Heart left ventricle (tissue), 16 donors: ENCODE measurements at regions of chr1 and their contacts with region 1.

Region 1: DNA sequence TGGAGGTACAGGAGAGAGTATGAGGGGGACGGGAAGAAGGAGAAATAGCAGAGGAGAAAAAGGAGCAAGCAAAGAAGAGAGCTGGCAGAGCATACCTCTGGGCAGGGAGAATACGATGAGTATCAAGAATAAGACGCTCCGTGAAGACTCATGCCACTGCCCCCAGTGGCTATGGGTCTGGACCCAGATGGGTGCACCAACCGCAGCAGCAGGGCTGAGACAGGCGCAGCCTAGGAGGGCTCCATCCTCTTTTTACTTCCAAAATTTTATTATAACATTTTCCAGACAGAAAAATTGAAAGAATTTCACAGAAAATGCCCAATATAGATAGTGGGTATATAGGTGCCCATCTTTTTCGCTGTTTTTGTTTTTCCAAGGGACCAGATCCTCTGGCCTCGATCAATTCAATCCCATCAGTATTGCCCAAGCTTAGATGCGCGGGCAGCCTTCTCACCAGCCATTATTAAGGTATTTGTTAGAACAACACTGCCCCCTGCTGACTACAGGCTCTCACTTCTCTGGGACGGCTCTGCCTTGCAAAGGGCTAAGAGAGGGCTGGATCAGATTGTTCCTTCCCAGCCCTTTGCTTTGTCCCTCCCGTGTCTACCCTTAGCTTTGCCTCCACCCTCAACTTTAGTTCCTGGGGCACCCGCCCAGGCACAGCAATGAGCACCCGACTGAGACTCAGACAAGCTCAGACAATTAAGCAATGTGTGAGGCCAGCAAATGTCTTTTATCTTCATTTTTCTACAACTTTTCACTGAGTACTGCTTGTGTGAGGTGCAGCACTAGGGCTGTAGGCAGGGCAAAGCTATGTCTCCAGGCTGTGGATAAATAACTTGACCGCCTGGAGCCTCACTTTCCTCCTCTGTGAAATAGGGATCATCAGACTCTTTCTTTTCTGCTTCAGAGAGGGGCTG is 17.5 kb upstream of the CAMK1G start:
- DNase-seq: peak; percentile 65 to 78 (median 68)
- ATAC-seq: peak; percentile 59 to 90 (median 81)
- H3K4me3 ChIP-seq: no peak overlapping the region
- H3K27ac ChIP-seq: no peak overlapping the region
- H3K4me1 ChIP-seq: peaks cover 0 to 5% (median 0%) of the 10 kb centered on the region in 12 donors
- H3K27me3 ChIP-seq: peaks cover 0 to 9% (median 0%) of the 10 kb centered on the region in 9 donors
- CTCF ChIP-seq: peak; percentile 59 to 84 (median 71)
- POLR2A ChIP-seq: no peak

Region 2: GRCh38 chr1:209207701-209208286 is 358.2 kb before region 1 on chr1:
- intact Hi-C with region 1: loop called in 6 of 10 experiments (anchors 5 to 10 kb)
- DNase-seq: peak; percentile 59 to 79 (median 63)
- ATAC-seq: peak; percentile 74 to 99 (median 92)
- H3K4me3 ChIP-seq: peak overlapping the region in 10 of 12 donors; percentile 4 to 53 (median 38)
- H3K27ac ChIP-seq: peak overlapping the region in 4 of 12 donors; percentile 6 to 22 (median 19)
- H3K4me1 ChIP-seq: peaks cover 0 to 16% (median 11%) of the 10 kb centered on the region in 12 donors
- H3K27me3 ChIP-seq: peaks cover 0 to 47% (median 25%) of the 10 kb centered on the region in 9 donors
- CTCF ChIP-seq: peak; percentile 39 to 90 (median 71)
- POLR2A ChIP-seq: no peak

Region 3: DNA sequence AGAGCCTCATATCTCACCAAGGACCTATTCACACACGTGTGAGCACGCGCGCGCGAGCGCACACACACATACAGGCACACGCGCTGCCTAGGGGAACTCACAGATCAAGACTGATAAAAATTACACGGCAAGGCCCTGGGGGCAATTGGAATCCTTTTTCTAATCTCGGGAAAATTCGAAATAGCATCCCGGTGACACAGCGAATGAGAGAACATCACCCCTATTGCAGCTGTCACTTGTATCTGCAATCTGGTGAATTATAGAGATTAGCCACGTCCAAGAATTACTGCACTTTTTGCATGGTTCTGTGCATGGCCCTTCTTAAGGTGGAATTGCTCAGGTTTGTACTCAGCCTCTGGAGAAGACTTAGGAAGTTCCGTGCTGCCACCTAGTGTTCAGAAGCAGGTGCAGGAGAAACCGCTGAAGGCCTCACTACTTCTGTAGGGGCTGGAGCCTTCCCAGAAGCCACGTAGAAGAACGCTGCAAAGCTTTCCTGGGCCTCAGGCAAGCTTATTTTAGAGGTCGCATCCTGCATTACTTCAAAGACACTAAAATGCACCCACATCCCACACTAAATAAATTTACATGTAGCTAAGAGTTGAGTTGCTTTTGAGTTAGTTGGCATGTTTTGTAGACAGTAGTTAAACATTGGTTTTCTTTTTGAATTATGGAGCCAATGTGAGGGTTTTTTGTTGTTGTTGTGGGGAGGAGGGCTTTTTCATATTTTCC is 211.7 kb before region 1 on chr1:
- intact Hi-C with region 1: loop called in 1 of 10 experiments (anchors 10 kb)
- DNase-seq: peak; percentile 54 to 80 (median 71)
- ATAC-seq: peak; percentile 78 to 92 (median 90)
- H3K4me3 ChIP-seq: no peak overlapping the region
- H3K27ac ChIP-seq: no peak overlapping the region
- H3K4me1 ChIP-seq: peaks cover 0 to 10% (median 4%) of the 10 kb centered on the region in 12 donors
- H3K27me3 ChIP-seq: no peaks in the 10 kb centered on the region
- CTCF ChIP-seq: peak; percentile 67 to 88 (median 82)
- POLR2A ChIP-seq: no peak

Region 4: GRCh38 chr1:209692745-209693504 is 126.9 kb after region 1 on chr1:
- intact Hi-C with region 1: loop called in 1 of 10 experiments (anchors 2 kb)
- DNase-seq: peak; percentile 68 to 85 (median 80)
- ATAC-seq: peak in 3 of 4 donors; percentile 56 to 78 (median 61)
- H3K4me3 ChIP-seq: no peak overlapping the region
- H3K27ac ChIP-seq: peak overlapping the region in 5 of 12 donors; percentile 17 to 56 (median 49)
- H3K4me1 ChIP-seq: peaks cover 0 to 46% (median 14%) of the 10 kb centered on the region in 12 donors
- H3K27me3 ChIP-seq: no peaks in the 10 kb centered on the region
- CTCF ChIP-seq: peak; percentile 78 to 94 (median 85)
- POLR2A ChIP-seq: no peak